GM12878 (cell line): ENCODE measurements at regions of chr20 and their contacts with region 1.

Region 1: GRCh38 chr20:11544029-11544678 is 373.5 kb upstream of the BTBD3 start:
- DNase-seq: peak; percentile 40
- ATAC-seq: peak; percentile 97
- H3K4me3 ChIP-seq: no peak overlapping the region
- H3K27ac ChIP-seq: no peak overlapping the region
- H3K4me1 ChIP-seq: no peaks in the 10 kb centered on the region
- H3K27me3 ChIP-seq: no peaks in the 10 kb centered on the region
- CTCF ChIP-seq: peak; percentile 33 to 76 (median 39); a peak in 4 of 6 replicates
- EP300 ChIP-seq: no peak
- POLR2A ChIP-seq: no peak
- RAD21 ChIP-seq: peak; percentile 86

Region 2: GRCh38 chr20:10434832-10435812 is 1109.0 kb before region 1 on chr20 and contains the start of gene SLX4IP:
- CTCF ChIA-PET with region 1: no interaction called
- POLR2A ChIA-PET with region 1: no interaction called
- RAD21 ChIA-PET with region 1: no interaction called
- SMC1A ChIA-PET with region 1: no interaction called
- in situ Hi-C with region 1: no loop called
- intact Hi-C with region 1: loop called (anchors 10 kb)
- DNase-seq: peak; percentile 88
- ATAC-seq: peak; percentile 75
- H3K4me3 ChIP-seq: peak within 1 kb of the TSS; percentile 97
- H3K27ac ChIP-seq: peak within 1 kb of the TSS; percentile 87
- H3K4me1 ChIP-seq: peaks cover 15% of the 10 kb centered on the region; the same call in 1 of the 2 replicates
- H3K27me3 ChIP-seq: no peaks in the 10 kb centered on the region
- CTCF ChIP-seq: no peak
- EP300 ChIP-seq: no peak
- POLR2A ChIP-seq: peak; percentile 81
- RAD21 ChIP-seq: no peak
- polyA plus RNA-seq, gene SLX4IP: 3.0 to 8.0 TPM

Region 3: GRCh38 chr20:11076434-11077105 is 467.6 kb before region 1 on chr20:
- CTCF ChIA-PET with region 1: no interaction called
- POLR2A ChIA-PET with region 1: no interaction called
- RAD21 ChIA-PET with region 1: no interaction called
- SMC1A ChIA-PET with region 1: no interaction called
- in situ Hi-C with region 1: no loop called
- intact Hi-C with region 1: loop called (anchors 10 kb)
- DNase-seq: no peak
- ATAC-seq: no peak
- H3K4me3 ChIP-seq: no peak overlapping the region
- H3K27ac ChIP-seq: no peak overlapping the region
- H3K4me1 ChIP-seq: no peaks in the 10 kb centered on the region
- H3K27me3 ChIP-seq: no peaks in the 10 kb centered on the region
- CTCF ChIP-seq: no peak
- EP300 ChIP-seq: no peak
- POLR2A ChIP-seq: no peak
- RAD21 ChIP-seq: no peak

Region 4: DNA sequence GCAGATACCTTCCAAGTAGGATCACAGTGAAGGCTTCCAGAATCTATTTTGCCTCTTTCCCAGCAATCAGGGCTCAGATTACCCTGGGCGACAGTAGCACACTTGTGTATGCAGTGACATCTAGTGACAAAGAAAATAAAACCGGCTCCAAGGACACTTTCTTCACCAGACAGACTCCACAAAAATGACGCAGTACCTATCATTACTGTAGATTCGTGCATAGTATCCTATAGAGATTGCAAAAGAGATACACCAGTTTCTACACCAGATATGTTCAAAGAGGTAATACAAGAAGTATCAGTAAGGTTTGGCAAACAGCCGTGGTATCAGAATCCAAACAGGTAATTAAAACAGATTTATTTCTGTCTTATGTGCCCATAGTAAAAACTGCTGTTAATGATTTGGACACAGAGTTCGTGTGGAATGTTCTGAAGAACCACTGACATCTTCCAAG is 270.0 kb before region 1 on chr20:
- CTCF ChIA-PET with region 1: interaction called, 18 read pairs
- POLR2A ChIA-PET with region 1: no interaction called
- RAD21 ChIA-PET with region 1: interaction called, 10 read pairs
- SMC1A ChIA-PET with region 1: interaction called, 18 read pairs
- in situ Hi-C with region 1: loop called (anchors 5 kb)
- intact Hi-C with region 1: loop called (anchors 1 kb)
- DNase-seq: no peak
- ATAC-seq: peak; percentile 94
- H3K4me3 ChIP-seq: no peak overlapping the region
- H3K27ac ChIP-seq: no peak overlapping the region
- H3K4me1 ChIP-seq: no peaks in the 10 kb centered on the region; the same call in 1 of the 2 replicates
- H3K27me3 ChIP-seq: no peaks in the 10 kb centered on the region
- CTCF ChIP-seq: peak; percentile 51 to 84 (median 54); a peak in 5 of 6 replicates
- EP300 ChIP-seq: no peak
- POLR2A ChIP-seq: no peak
- RAD21 ChIP-seq: peak; percentile 94

Region 5: GRCh38 chr20:11454966-11455799 is 89.0 kb before region 1 on chr20:
- CTCF ChIA-PET with region 1: interaction called, 7 read pairs
- POLR2A ChIA-PET with region 1: interaction called, 4 read pairs
- RAD21 ChIA-PET with region 1: interaction called, 14 read pairs
- SMC1A ChIA-PET with region 1: interaction called, 19 read pairs
- in situ Hi-C with region 1: no loop called
- intact Hi-C with region 1: loop called (anchors 1 kb)
- DNase-seq: no peak
- ATAC-seq: peak; percentile 66
- H3K4me3 ChIP-seq: no peak overlapping the region
- H3K27ac ChIP-seq: no peak overlapping the region
- H3K4me1 ChIP-seq: no peaks in the 10 kb centered on the region
- H3K27me3 ChIP-seq: no peaks in the 10 kb centered on the region
- CTCF ChIP-seq: no peak
- EP300 ChIP-seq: peak in 1 of 2 experiments; percentile 62; a peak in 1 of 4 replicates
- POLR2A ChIP-seq: no peak
- RAD21 ChIP-seq: no peak

Region 6: DNA sequence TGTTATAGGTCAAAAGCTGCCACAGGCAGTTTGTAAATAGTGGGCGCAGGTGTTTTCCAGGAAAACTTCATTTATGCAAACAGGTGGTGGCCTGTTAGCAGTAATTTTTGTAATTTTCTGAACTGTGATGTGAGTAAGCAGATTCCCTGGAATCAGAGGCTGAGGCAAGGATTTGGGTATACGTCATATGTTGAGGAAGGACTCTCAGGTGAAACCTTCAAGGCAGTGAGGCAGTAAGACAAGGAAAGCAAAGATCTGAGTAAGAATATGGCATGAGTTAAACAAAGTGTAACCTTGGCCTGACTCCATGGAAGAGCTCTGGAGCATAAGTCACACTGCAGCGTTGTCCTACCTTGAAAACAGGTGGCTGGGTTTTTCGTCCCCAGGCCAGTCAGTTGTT is 82.4 kb after region 1 on chr20:
- CTCF ChIA-PET with region 1: no interaction called
- POLR2A ChIA-PET with region 1: no interaction called
- RAD21 ChIA-PET with region 1: no interaction called
- SMC1A ChIA-PET with region 1: no interaction called
- in situ Hi-C with region 1: no loop called
- intact Hi-C with region 1: no loop called
- DNase-seq: no peak
- ATAC-seq: no peak
- H3K4me3 ChIP-seq: no peak overlapping the region
- H3K27ac ChIP-seq: no peak overlapping the region
- H3K4me1 ChIP-seq: no peaks in the 10 kb centered on the region
- H3K27me3 ChIP-seq: no peaks in the 10 kb centered on the region
- CTCF ChIP-seq: no peak
- EP300 ChIP-seq: no peak
- POLR2A ChIP-seq: no peak
- RAD21 ChIP-seq: no peak

Region 7: DNA sequence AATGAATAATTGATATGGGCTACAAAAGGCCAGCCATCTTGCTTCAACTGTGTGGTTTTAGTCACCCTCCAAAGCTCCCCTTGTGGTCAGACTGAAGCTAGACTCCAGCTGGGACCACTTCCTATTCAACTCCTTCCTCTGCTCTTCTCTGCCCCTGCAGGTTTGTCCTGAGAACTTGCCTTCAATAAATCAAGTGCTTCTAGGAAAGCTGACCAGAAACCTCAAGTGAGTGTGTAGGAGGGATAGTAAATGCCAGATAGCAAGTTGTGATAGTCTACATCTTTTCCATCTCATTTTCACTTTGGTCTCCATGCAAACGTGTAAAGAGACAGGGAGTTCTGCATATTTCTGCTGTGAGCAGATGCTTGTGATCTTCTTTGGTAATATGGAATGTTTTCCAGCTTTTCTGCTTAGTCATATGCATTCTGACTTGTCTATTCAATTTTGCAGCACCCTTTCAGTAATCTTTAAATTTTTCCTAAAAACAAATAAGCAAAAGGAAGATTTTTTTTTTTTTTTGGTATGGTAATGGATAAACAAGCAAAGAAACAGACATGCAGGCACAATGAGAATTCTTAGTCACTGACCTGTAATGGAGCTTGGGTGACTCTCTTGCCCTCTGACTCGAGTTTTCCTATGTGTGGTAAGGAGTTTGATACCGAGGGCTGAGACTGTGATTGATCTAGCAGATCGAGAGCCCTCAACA is 172.2 kb after region 1 on chr20:
- CTCF ChIA-PET with region 1: no interaction called
- POLR2A ChIA-PET with region 1: no interaction called
- RAD21 ChIA-PET with region 1: no interaction called
- SMC1A ChIA-PET with region 1: no interaction called
- in situ Hi-C with region 1: no loop called
- intact Hi-C with region 1: no loop called
- DNase-seq: no peak
- ATAC-seq: peak; percentile 53; the same call in 2 of the 3 replicates
- H3K4me3 ChIP-seq: no peak overlapping the region
- H3K27ac ChIP-seq: no peak overlapping the region
- H3K4me1 ChIP-seq: no peaks in the 10 kb centered on the region
- H3K27me3 ChIP-seq: no peaks in the 10 kb centered on the region
- CTCF ChIP-seq: 0 out of 6 replicates have a peak, but pooled peaks of 1 of the 3 experiments have one; percentile 8
- EP300 ChIP-seq: no peak
- POLR2A ChIP-seq: no peak
- RAD21 ChIP-seq: no peak